Mammary epithelial cell (primary cell): ENCODE measurements at regions of chr1 and their contacts with region 1.

Region 1: GRCh38 chr1:68010090-68010489 is 40.3 kb downstream of the DIRAS3 start:
- DNase-seq: peak; percentile 17
- H3K4me3 ChIP-seq: no peak overlapping the region
- H3K27ac ChIP-seq: no peak overlapping the region
- H3K4me1 ChIP-seq: no peaks in the 10 kb centered on the region
- H3K27me3 ChIP-seq: no peaks in the 10 kb centered on the region
- CTCF ChIP-seq: peak; percentile 36 to 54

Region 2: GRCh38 chr1:67780637-67781036 is 229.5 kb before region 1 on chr1:
- CTCF ChIA-PET with region 1: no interaction called
- dilution Hi-C with region 1: no loop called
- in situ Hi-C with region 1: no loop called
- intact Hi-C with region 1: no loop called
- DNase-seq: no peak
- H3K4me3 ChIP-seq: no peak overlapping the region
- H3K27ac ChIP-seq: no peak overlapping the region
- H3K4me1 ChIP-seq: no peaks in the 10 kb centered on the region
- H3K27me3 ChIP-seq: no peaks in the 10 kb centered on the region
- CTCF ChIP-seq: no peak

Region 3: DNA sequence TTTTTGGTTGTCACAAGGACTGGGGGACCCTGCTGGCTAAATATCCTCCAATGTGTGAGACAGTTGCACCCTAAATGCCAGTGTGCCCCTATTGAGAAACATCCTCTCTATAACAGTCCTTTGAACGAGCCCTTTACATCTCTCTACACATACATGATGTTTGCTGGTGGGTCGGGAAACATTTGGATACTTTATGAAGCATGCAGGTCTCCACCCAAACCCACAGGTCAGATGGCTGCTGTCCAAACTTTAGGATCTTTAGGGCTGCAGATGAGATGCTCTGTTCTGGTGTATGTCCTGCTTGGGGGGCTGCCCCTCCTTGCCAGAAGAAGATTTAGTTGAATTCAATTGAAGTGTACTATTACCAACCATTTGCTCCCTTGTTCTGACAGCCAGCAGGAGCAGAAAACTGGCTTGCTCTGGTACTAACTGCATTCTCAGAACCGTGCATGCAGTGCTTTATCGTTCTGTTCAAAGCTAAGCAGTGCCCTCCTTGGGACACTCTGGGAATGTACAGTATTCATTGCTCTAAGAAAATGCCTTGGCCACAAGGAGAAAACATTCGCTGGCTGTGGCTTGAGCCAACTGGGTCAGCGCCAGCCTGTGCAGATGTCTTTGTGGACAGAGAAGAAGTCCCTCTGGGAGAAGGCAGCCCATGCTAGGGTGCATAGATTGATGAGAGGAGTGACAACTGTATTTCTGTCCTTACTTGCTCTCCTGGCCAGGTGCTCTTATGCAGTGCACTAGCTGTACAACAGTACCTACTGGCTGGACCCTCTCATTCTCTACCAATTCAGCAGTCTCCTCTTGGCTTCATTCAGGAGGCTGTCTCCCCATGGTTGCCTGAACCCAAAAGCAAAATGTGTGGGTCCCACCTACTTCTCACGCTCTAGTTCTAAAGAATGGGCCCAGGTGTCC is 101.7 kb after region 1 on chr1:
- CTCF ChIA-PET with region 1: no interaction called
- dilution Hi-C with region 1: no loop called
- in situ Hi-C with region 1: no loop called
- intact Hi-C with region 1: loop called (anchors 2 kb)
- DNase-seq: peak; percentile 63
- H3K4me3 ChIP-seq: no peak overlapping the region
- H3K27ac ChIP-seq: no peak overlapping the region
- H3K4me1 ChIP-seq: peaks cover 27% of the 10 kb centered on the region
- H3K27me3 ChIP-seq: no peaks in the 10 kb centered on the region
- CTCF ChIP-seq: peak; percentile 64 to 75